B cell (primary cell): ENCODE measurements at regions of chr20 and their contacts with region 1.

Region 1: DNA sequence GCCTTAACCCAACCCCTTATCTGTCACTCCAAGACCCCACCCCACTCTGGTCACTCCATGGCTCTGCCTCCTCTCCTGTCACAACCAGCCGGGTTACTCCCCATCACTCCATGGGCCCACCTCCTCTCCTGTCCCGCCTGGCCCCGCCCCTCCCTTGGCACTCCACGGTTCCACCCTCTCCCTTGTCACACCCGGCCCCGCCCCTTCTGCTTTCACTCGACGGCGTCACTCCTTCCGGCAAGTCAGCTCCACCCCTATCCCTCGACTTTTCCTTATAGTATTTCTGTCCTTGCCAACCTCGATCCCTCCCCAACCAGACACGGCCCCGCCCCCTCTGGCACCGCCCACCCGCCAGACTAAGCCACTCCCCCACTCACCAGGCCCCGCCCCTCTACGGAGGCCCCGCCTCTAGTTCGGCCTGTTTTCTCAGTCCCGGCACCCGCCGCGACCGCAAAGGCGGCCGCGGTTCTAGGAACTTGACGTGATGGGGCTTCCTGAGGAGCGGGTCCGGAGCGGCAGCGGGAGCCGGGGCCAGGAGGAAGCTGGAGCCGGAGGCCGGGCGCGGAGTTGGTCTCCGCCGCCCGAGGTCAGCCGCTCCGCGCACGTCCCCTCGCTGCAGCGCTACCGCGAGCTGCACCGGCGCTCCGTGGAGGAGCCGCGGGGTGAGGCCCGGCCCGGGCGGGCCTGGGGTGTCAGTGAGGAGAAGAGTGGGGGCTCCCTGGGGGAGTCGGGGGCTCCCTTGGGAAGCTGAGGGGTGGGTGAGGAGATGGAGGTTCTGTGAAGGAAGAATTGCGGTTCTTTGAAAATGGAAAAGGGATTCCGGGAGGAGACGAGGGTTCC is at the start of gene ACSS2:
- DNase-seq: peak; percentile 94
- ATAC-seq: peak; percentile 87
- H3K4me3 ChIP-seq: peak within 1 kb of the TSS; percentile 54 to 80 (median 69)
- H3K4me3 Mint-ChIP-seq: peak within 1 kb of the TSS; percentile 92
- H3K27ac ChIP-seq: peak within 1 kb of the TSS in 1 of 2 donors; percentile 56
- H3K27ac Mint-ChIP-seq: peak within 1 kb of the TSS; percentile 81
- H3K4me1 ChIP-seq: peaks cover 35 to 41% of the 10 kb centered on the region in 2 donors
- H3K4me1 Mint-ChIP-seq: peaks cover 47% of the 10 kb centered on the region
- H3K27me3 ChIP-seq: no peaks in the 10 kb centered on the region
- H3K27me3 Mint-ChIP-seq: no peaks in the 10 kb centered on the region
- CTCF ChIP-seq: no peak
- total RNA-seq, gene ACSS2: 14.7 and 22.1 TPM in 2 replicates

Region 2: DNA sequence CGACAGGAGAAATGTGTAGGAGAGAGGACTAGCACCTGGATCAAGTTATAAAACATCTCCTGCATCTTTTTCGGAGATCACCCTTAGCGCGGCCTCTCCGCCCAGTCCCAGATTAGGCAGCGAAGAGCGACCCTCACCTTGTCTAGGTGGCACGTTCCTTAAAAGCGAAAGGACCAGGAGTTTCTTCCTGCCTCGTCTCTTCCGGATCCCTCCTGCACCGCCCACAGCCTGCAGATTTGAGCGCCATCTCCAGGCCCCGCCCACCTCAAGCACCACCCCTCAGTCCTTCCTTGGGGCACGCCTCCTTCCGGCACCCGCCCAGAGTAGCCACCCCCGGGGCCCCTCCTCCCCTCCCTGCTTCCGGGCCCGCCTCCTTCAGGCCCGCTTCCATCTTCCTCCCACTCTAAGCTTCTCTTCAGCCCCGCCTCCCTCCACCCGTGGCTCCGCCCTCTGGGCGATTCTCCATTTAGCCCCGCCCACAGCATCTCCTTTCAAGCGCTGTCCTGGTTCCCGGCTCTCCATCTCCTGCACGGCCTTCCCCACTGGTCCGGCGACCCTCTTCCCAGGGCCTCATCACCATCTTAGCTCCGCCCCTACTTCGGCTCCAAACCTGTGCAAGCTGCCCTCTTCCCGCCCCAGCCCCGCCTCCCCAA is 883.3 kb before region 1 on chr20:
- CTCF ChIA-PET with region 1: no interaction called
- POLR2A ChIA-PET with region 1: no interaction called
- intact Hi-C with region 1: loop called (anchors 5 kb)
- DNase-seq: peak; percentile 99
- ATAC-seq: peak; percentile 84
- H3K4me3 ChIP-seq: peak overlapping the region; percentile 94 to 99 (median 98)
- H3K4me3 Mint-ChIP-seq: peak overlapping the region; percentile 92
- H3K27ac ChIP-seq: peak overlapping the region; percentile 90 to 91
- H3K27ac Mint-ChIP-seq: peak overlapping the region; percentile 99
- H3K4me1 ChIP-seq: peaks cover 40 to 48% of the 10 kb centered on the region in 2 donors
- H3K4me1 Mint-ChIP-seq: peaks cover 59% of the 10 kb centered on the region
- H3K27me3 ChIP-seq: no peaks in the 10 kb centered on the region
- H3K27me3 Mint-ChIP-seq: no peaks in the 10 kb centered on the region
- CTCF ChIP-seq: no peak

Region 3: GRCh38 chr20:34558320-34559218 is 317.8 kb before region 1 on chr20 and contains the start of gene MAP1LC3A:
- CTCF ChIA-PET with region 1: no interaction called
- POLR2A ChIA-PET with region 1: no interaction called
- intact Hi-C with region 1: loop called (anchors 2 kb)
- DNase-seq: peak; percentile 98
- ATAC-seq: peak; percentile 89
- H3K4me3 ChIP-seq: peak within 1 kb of the TSS; percentile 50 to 94 (median 77)
- H3K4me3 Mint-ChIP-seq: peak within 1 kb of the TSS; percentile 85
- H3K27ac ChIP-seq: peak within 1 kb of the TSS; percentile 72 to 86
- H3K27ac Mint-ChIP-seq: peak within 1 kb of the TSS; percentile 92
- H3K4me1 ChIP-seq: peaks cover 8 to 14% of the 10 kb centered on the region in 2 donors
- H3K4me1 Mint-ChIP-seq: peaks cover 13% of the 10 kb centered on the region
- H3K27me3 ChIP-seq: no peaks in the 10 kb centered on the region
- H3K27me3 Mint-ChIP-seq: no peaks in the 10 kb centered on the region
- CTCF ChIP-seq: no peak
- total RNA-seq, gene MAP1LC3A: 3.5 and 4.5 TPM in 2 replicates

Region 4: GRCh38 chr20:34825530-34826362 is 50.6 kb before region 1 on chr20 and contains the start of gene NCOA6:
- CTCF ChIA-PET with region 1: interaction called, 4 read pairs
- POLR2A ChIA-PET with region 1: no interaction called
- intact Hi-C with region 1: loop called (anchors 1 kb)
- DNase-seq: peak; percentile 88
- ATAC-seq: peak; percentile 74
- H3K4me3 ChIP-seq: peak within 1 kb of the TSS; percentile 68 to 94 (median 82)
- H3K4me3 Mint-ChIP-seq: peak within 1 kb of the TSS; percentile 94
- H3K27ac ChIP-seq: peak within 1 kb of the TSS; percentile 60 to 67
- H3K27ac Mint-ChIP-seq: peak within 1 kb of the TSS; percentile 92
- H3K4me1 ChIP-seq: peaks cover 19 to 21% of the 10 kb centered on the region in 2 donors
- H3K4me1 Mint-ChIP-seq: peaks cover 31% of the 10 kb centered on the region
- H3K27me3 ChIP-seq: no peaks in the 10 kb centered on the region
- H3K27me3 Mint-ChIP-seq: peaks cover 3% of the 10 kb centered on the region
- CTCF ChIP-seq: no peak
- total RNA-seq, gene NCOA6: 31.0 and 31.9 TPM in 2 replicates

Region 5: GRCh38 chr20:34955232-34956040 is 79.1 kb after region 1 on chr20 and contains the starts of genes GSS and MYH7B:
- CTCF ChIA-PET with region 1: interaction called, 8 read pairs
- POLR2A ChIA-PET with region 1: interaction called, 12 read pairs
- intact Hi-C with region 1: loop called (anchors 1 kb)
- DNase-seq: peak; percentile 95
- ATAC-seq: peak; percentile 93
- H3K4me3 ChIP-seq: peak within 1 kb of the TSS; percentile 58 to 88 (median 73)
- H3K4me3 Mint-ChIP-seq: peak within 1 kb of the TSS; percentile 97
- H3K27ac ChIP-seq: peak within 1 kb of the TSS; percentile 42 to 79
- H3K27ac Mint-ChIP-seq: peak within 1 kb of the TSS; percentile 93
- H3K4me1 ChIP-seq: peaks cover 5 to 16% of the 10 kb centered on the region in 2 donors
- H3K4me1 Mint-ChIP-seq: peaks cover 25% of the 10 kb centered on the region
- H3K27me3 ChIP-seq: no peaks in the 10 kb centered on the region
- H3K27me3 Mint-ChIP-seq: no peaks in the 10 kb centered on the region
- CTCF ChIP-seq: no peak
- total RNA-seq, gene GSS: 22.0 and 22.5 TPM in 2 replicates
- total RNA-seq, gene MYH7B: 0.66 and 0.79 TPM in 2 replicates

Region 6: GRCh38 chr20:35146920-35147574 is 270.7 kb after region 1 on chr20 and contains the start of gene EDEM2:
- CTCF ChIA-PET with region 1: no interaction called
- POLR2A ChIA-PET with region 1: no interaction called
- intact Hi-C with region 1: loop called (anchors 2 kb)
- DNase-seq: peak; percentile 95
- ATAC-seq: peak; percentile 80
- H3K4me3 ChIP-seq: peak within 1 kb of the TSS; percentile 69 to 94 (median 90)
- H3K4me3 Mint-ChIP-seq: peak within 1 kb of the TSS; percentile 96
- H3K27ac ChIP-seq: peak within 1 kb of the TSS; percentile 79 to 89
- H3K27ac Mint-ChIP-seq: peak within 1 kb of the TSS; percentile 94
- H3K4me1 ChIP-seq: peaks cover 33 to 43% of the 10 kb centered on the region in 2 donors
- H3K4me1 Mint-ChIP-seq: peaks cover 36% of the 10 kb centered on the region
- H3K27me3 ChIP-seq: no peaks in the 10 kb centered on the region
- H3K27me3 Mint-ChIP-seq: no peaks in the 10 kb centered on the region
- CTCF ChIP-seq: no peak
- total RNA-seq, gene EDEM2: 28.1 and 28.6 TPM in 2 replicates

Region 7: DNA sequence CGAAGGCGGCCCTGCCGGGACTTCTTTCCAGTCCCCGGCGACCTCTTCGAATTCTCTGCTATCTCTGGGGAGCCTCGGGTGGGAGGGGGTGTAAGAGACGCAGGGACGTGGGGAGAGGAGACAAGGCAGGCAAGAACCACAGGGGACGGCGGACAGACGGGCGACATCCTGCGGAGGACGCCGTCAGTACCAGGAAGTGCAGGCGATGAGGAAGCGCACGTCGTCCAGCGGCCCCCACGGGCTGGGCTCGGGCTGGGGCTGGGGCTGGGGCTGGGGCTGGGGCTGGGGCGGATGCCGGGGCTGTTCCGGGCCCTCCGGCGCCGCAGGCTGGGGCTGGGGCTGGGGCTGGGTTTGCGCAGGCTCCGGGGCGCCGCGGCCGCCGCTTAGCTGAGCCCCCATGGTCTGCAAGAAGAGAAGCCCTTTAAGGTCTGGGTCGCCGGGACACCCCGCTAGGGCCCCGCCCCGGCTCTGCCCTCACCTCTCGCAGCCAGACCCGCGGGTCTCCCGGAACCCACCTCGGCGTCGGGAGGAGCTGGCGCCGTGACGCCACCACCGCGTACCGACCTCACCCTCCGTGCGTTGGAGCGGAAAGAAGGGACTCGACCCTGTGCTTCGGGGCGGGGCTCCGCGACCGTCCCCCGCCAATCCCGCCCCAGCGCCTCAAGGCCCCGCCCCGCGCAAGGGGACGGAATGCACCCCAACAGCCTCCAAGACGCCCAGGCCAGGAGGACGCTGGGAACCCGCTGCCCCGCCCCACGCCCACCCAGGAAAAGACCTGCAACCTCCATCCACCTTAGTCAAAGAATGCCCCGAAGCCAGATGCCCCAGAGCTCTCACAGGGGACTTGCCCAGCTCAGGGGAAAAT is 401.4 kb after region 1 on chr20 and contains the start of gene MMP24OS:
- CTCF ChIA-PET with region 1: no interaction called
- POLR2A ChIA-PET with region 1: no interaction called
- intact Hi-C with region 1: loop called (anchors 2 kb)
- DNase-seq: peak; percentile 95
- ATAC-seq: peak; percentile 90
- H3K4me3 ChIP-seq: peak within 1 kb of the TSS; percentile 70 to 86 (median 77)
- H3K4me3 Mint-ChIP-seq: peak within 1 kb of the TSS; percentile 94
- H3K27ac ChIP-seq: peak within 1 kb of the TSS; percentile 92 to 96
- H3K27ac Mint-ChIP-seq: peak within 1 kb of the TSS; percentile 99
- H3K4me1 ChIP-seq: peaks cover 14 to 21% of the 10 kb centered on the region in 2 donors
- H3K4me1 Mint-ChIP-seq: peaks cover 20% of the 10 kb centered on the region
- H3K27me3 ChIP-seq: no peaks in the 10 kb centered on the region
- H3K27me3 Mint-ChIP-seq: no peaks in the 10 kb centered on the region
- CTCF ChIP-seq: peak; percentile 22
- total RNA-seq, gene MMP24OS: 57.0 and 66.9 TPM in 2 replicates